ENCODE measurements at regions of chr14 and their contacts with region 1.

Region 1: DNA sequence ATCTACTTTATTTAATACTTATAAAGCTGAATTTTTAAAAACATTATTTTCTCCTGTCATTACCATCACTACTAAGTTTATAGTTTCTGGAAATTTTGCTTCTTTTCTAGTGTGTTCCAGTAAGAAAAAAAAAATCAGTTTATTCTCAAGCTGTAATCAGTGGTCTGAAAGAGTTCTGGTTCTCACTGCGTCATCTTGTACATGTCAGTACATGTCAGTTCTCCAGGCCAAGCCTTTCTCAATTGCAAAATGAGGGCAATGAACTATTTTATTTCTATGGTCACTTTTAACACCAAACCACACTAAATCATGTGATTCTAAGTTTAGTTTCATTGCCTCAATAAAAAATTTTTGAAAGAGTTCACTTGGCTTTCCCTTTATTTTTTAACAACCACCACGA is 468.9 kb upstream of the LRFN5 start:
- DNase-seq: no peak
- H3K4me3 ChIP-seq: no peak overlapping the region
- H3K27ac ChIP-seq: no peak overlapping the region
- H3K4me1 ChIP-seq: no peaks in the 10 kb centered on the region
- H3K27me3 ChIP-seq: no peaks in the 10 kb centered on the region
- CTCF ChIP-seq: no peak
- EP300 ChIP-seq: no peak
- POLR2A ChIP-seq: no peak

Region 2: GRCh38 chr14:41201721-41202120 is 64.0 kb after region 1 on chr14:
- intact Hi-C with region 1: loop called in 1 of 4 experiments (anchors 2 kb)
- DNase-seq: no peak
- H3K4me3 ChIP-seq: no peak overlapping the region
- H3K27ac ChIP-seq: no peak overlapping the region
- H3K4me1 ChIP-seq: no peaks in the 10 kb centered on the region
- H3K27me3 ChIP-seq: no peaks in the 10 kb centered on the region
- CTCF ChIP-seq: no peak
- EP300 ChIP-seq: no peak
- POLR2A ChIP-seq: no peak

Measured in ovary (tissue), 10 donors.